ENCODE measurements at regions of chr14 and their contacts with region 1.

Region 1: DNA sequence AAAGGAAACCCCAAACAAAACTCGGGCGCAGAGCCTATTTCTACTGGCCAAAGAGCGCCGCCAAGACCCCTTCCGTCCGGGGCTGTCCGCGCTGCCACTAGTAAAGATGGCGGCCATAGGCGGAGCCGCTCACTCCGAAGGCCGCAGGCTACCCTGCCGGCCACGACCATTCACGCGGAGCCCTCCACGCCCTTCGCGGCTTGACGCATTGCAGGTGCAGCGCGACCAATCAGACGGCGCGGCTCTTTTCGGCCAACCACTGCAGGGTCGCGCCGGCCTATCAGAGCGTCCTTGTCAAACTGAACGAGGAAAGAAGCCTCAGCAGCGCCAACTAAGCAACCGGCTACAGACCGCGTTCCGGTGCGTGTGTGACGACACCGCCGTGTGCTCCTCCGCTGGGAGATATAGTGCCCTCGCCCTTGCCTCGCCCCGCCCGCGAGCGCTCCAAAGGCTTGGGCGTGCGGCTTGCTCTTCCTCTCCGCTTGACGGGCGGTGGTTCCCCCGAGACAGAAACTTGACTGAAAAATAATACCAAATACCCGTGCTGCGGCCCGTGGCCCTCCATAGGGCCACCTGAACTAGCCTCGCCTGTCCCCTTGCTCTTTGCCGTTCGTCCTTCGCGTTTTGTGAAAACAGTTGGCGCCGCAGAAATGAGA is 13.6 kb upstream of the CALM1 start:
- DNase-seq: peak; percentile 100
- H3K4me3 ChIP-seq: peak overlapping the region; percentile 27 to 53 (median 47)
- H3K27ac ChIP-seq: peak overlapping the region; percentile 97 to 100 (median 99)
- H3K4me1 ChIP-seq: peaks cover 17% of the 10 kb centered on the region in 2 donors
- H3K27me3 ChIP-seq: no peaks in the 10 kb centered on the region
- CTCF ChIP-seq: peak in 2 of 6 experiments; percentile 14 to 26
- POLR2A ChIP-seq: peak; percentile 95 to 98

Region 2: DNA sequence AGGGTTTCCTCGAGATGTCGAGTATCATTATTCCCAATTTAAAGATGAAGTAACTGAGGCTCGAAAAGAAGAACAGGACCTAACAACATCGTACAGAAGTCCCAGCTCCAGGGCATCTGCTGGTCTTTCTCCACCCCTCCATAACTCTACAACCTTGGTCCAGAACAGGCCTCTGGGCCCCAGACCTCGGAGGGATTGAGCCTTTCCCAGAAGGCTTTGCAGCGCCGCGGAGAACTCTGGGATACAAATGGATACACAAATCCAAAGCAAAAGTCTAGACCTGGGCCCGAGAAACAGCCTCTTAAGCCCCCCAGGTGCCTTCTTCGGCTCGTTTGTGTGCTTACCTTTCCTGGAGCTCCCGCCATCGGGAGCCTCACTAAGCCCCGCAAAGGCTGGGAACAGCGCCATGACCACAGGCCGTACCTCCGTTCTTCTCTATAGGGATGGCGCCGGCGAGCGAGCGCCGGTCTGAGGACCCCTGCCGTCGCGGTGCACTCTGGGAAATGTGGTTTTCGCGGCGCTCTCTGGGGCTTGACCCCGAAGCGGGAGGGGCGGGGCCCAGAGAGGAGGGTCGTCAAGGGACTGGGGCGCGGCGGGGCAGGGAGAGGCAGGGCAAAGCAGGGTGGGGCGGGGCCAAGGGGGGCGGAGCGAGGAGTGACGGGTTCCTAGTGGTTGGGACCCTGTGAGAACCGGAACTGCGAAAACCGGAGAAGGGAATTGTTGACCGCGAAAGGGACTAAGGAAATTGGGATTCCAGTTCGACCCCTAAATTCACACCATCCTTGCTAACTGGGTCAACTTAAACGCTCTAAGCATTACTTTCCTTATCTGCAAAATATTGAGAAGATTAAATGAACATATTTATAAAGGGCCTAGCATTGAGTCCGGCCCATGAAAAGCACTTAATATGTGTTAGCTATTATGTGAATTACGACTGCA is 51.4 kb before region 1 on chr14 and contains the start of gene NRDE2:
- intact Hi-C with region 1: loop called (anchors 10 kb)
- DNase-seq: peak; percentile 99 to 100
- H3K4me3 ChIP-seq: peak within 1 kb of the TSS; percentile 48 to 79 (median 72)
- H3K27ac ChIP-seq: peak within 1 kb of the TSS; percentile 69 to 88 (median 87)
- H3K4me1 ChIP-seq: peaks cover 7 to 12% of the 10 kb centered on the region in 2 donors
- H3K27me3 ChIP-seq: no peaks in the 10 kb centered on the region
- CTCF ChIP-seq: no peak
- POLR2A ChIP-seq: peak in 1 of 2 donors; percentile 65
- total RNA-seq, gene NRDE2: 21.7 to 38.7 (median 26.7) TPM

Region 3: DNA sequence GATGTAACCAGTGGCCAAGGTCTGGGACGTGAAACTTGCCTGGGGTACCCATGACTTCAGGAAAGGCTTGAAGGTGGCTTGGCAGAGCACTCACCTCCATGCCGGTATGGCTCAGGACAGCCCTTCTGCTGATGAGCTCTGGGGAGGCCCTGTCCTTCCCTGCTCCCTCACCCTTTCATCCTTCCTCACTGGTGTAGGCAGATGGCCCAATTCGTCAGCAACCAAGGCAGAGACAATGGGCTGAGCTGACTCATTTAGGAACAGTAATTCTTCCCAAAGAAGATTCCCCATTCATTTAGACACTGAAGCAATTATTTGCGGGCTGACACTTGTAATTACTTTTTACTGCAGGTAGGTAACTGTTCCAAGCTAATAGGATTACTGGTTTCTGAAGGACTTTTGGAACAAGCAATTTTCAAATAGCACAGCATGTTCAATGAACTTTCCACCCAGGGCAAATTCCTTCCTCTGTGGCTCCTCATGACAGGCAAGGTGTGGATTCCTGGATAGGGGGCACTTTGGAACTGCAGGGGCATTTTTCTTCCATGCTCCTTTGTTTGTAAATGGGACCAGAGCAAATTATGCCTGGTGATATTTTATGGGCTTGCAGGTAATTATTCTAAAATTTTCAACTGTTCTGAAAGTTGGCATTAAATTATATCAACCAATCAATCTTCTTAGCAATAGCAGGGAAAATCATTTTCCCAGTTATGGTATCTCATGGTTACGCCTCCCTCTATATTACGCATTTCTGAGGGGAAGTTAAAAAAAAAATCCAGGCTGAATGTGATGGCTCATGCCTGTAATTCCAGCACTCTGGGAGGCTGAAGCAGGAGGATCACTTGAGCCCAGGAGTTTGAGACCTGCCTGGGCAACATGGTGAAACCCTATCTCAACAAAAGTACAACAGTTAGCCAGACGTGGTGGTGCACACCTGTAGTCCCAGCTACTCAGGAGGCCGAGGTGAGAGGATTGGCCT is 27.4 kb before region 1 on chr14:
- intact Hi-C with region 1: no loop called
- DNase-seq: peak; percentile 20 to 38
- H3K4me3 ChIP-seq: no peak overlapping the region
- H3K27ac ChIP-seq: peak overlapping the region in 2 of 3 donors; percentile 64 to 72
- H3K4me1 ChIP-seq: peaks cover 16 to 23% of the 10 kb centered on the region in 2 donors
- H3K27me3 ChIP-seq: no peaks in the 10 kb centered on the region
- CTCF ChIP-seq: peak in 1 of 6 experiments; percentile 21
- POLR2A ChIP-seq: no peak